ENCODE measurements at regions of chr11 and their contacts with region 1.

Region 1: GRCh38 chr11:64742889-64743590 is 902 bp downstream of the RASGRP2 start:
- DNase-seq: peak; percentile 69 to 82 (median 72)
- H3K4me3 ChIP-seq: peak overlapping the region; percentile 87
- H3K4me3 Mint-ChIP-seq: peak overlapping the region; percentile 90 to 99 (median 97)
- H3K27ac ChIP-seq: peak overlapping the region; percentile 77
- H3K27ac Mint-ChIP-seq: peak overlapping the region in 1 of 8 donors; percentile 96
- H3K4me1 ChIP-seq: peaks cover 31% of the 10 kb centered on the region
- H3K4me1 Mint-ChIP-seq: peaks cover 31 to 64% (median 35%) of the 10 kb centered on the region in 3 donors
- H3K27me3 ChIP-seq: no peaks in the 10 kb centered on the region
- H3K27me3 Mint-ChIP-seq: peaks cover 0 to 7% of the 10 kb centered on the region in 2 donors

Region 2: DNA sequence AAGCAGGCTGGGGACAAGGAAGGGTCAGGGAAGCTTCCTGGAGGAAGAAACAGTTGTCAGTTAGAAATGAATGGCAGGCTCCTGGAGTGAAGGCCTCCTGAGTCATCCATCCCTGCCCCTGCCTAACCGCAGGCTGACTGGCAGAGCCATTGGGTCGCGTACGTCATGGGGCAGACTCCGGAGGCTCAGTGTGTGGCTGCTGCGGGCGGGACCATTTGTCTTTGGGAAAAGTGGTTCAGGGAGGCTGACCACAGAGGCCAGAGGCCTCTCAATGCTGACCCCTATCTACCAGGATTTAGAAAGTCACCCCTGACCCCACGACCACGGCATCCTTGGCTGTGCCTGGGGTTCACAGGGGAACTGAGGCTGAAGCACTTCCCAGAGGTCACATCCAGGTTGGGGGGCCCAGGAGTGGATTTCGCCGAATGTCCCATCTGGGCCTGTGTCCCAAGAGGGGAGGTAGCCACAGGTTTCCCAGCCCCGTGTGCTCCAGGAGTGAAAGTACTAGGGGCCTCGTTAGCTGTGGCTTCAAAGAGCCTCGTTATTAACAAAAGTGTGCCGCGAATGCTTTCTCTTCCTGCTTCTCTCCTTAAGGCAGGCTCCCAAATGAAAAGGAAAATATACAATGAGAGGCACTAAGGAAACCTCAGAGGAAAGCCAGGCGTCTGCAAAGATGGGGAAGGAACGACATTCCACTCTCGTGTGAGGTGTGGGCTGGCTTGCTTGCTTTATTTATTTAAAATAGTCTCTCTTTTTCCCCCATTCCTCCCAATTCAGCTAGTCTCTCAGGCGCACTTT is 648.4 kb before region 1 on chr11:
- CTCF ChIA-PET with region 1: no interaction called
- POLR2A ChIA-PET with region 1: no interaction called
- DNase-seq: no peak
- H3K4me3 ChIP-seq: no peak overlapping the region
- H3K4me3 Mint-ChIP-seq: no peak overlapping the region
- H3K27ac ChIP-seq: no peak overlapping the region
- H3K27ac Mint-ChIP-seq: peak overlapping the region in 1 of 8 donors; percentile 14
- H3K4me1 ChIP-seq: no peaks in the 10 kb centered on the region
- H3K4me1 Mint-ChIP-seq: no peaks in the 10 kb centered on the region
- H3K27me3 ChIP-seq: no peaks in the 10 kb centered on the region
- H3K27me3 Mint-ChIP-seq: peaks cover 0 to 1% of the 10 kb centered on the region in 2 donors

Region 3: GRCh38 chr11:64688534-64688982 is 54.5 kb before region 1 on chr11:
- CTCF ChIA-PET with region 1: interaction called, 21 read pairs
- POLR2A ChIA-PET with region 1: interaction called, 3 read pairs
- DNase-seq: peak; percentile 83 to 92 (median 87)
- H3K4me3 ChIP-seq: peak overlapping the region; percentile 39
- H3K4me3 Mint-ChIP-seq: peak overlapping the region in 6 of 7 donors; percentile 55 to 82 (median 66)
- H3K27ac ChIP-seq: no peak overlapping the region
- H3K27ac Mint-ChIP-seq: peak overlapping the region in 6 of 8 donors; percentile 1 to 81 (median 27)
- H3K4me1 ChIP-seq: peaks cover 9% of the 10 kb centered on the region
- H3K4me1 Mint-ChIP-seq: peaks cover 9 to 27% (median 24%) of the 10 kb centered on the region in 3 donors
- H3K27me3 ChIP-seq: peaks cover 17% of the 10 kb centered on the region
- H3K27me3 Mint-ChIP-seq: peaks cover 23 to 29% of the 10 kb centered on the region in 2 donors

Region 4: DNA sequence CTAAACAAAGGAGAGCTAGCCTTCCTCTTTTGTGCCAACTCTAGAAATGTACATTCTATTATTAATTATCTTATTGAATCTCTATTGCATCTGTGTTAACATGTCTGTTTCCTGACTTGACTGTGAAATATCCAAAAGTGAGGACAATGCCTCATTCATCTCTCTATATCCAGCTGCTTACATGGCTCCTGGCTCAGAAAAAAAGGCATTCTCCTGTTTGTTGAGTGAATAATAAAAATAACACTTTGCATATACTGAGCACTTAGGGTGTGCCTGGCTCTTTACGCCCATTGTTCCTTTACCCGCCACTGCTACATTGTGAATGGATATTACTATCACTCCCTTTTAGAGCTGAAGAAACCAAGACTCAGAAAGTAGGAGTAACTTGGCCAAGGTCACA is 40.0 kb before region 1 on chr11:
- CTCF ChIA-PET with region 1: no interaction called
- POLR2A ChIA-PET with region 1: no interaction called
- DNase-seq: no peak
- H3K4me3 ChIP-seq: no peak overlapping the region
- H3K4me3 Mint-ChIP-seq: no peak overlapping the region
- H3K27ac ChIP-seq: no peak overlapping the region
- H3K27ac Mint-ChIP-seq: no peak overlapping the region
- H3K4me1 ChIP-seq: no peaks in the 10 kb centered on the region
- H3K4me1 Mint-ChIP-seq: no peaks in the 10 kb centered on the region
- H3K27me3 ChIP-seq: peaks cover 4% of the 10 kb centered on the region
- H3K27me3 Mint-ChIP-seq: peaks cover 21 to 40% of the 10 kb centered on the region in 2 donors

Region 5: GRCh38 chr11:64729851-64730382 is 13.1 kb before region 1 on chr11:
- CTCF ChIA-PET with region 1: interaction called, 10 read pairs
- POLR2A ChIA-PET with region 1: interaction called, 5 read pairs
- DNase-seq: no peak
- H3K4me3 ChIP-seq: no peak overlapping the region
- H3K4me3 Mint-ChIP-seq: no peak overlapping the region
- H3K27ac ChIP-seq: no peak overlapping the region
- H3K27ac Mint-ChIP-seq: peak overlapping the region in 3 of 8 donors; percentile 12 to 78 (median 70)
- H3K4me1 ChIP-seq: no peaks in the 10 kb centered on the region
- H3K4me1 Mint-ChIP-seq: peaks cover 14 to 23% (median 20%) of the 10 kb centered on the region in 3 donors
- H3K27me3 ChIP-seq: no peaks in the 10 kb centered on the region
- H3K27me3 Mint-ChIP-seq: no peaks in the 10 kb centered on the region

Region 6: DNA sequence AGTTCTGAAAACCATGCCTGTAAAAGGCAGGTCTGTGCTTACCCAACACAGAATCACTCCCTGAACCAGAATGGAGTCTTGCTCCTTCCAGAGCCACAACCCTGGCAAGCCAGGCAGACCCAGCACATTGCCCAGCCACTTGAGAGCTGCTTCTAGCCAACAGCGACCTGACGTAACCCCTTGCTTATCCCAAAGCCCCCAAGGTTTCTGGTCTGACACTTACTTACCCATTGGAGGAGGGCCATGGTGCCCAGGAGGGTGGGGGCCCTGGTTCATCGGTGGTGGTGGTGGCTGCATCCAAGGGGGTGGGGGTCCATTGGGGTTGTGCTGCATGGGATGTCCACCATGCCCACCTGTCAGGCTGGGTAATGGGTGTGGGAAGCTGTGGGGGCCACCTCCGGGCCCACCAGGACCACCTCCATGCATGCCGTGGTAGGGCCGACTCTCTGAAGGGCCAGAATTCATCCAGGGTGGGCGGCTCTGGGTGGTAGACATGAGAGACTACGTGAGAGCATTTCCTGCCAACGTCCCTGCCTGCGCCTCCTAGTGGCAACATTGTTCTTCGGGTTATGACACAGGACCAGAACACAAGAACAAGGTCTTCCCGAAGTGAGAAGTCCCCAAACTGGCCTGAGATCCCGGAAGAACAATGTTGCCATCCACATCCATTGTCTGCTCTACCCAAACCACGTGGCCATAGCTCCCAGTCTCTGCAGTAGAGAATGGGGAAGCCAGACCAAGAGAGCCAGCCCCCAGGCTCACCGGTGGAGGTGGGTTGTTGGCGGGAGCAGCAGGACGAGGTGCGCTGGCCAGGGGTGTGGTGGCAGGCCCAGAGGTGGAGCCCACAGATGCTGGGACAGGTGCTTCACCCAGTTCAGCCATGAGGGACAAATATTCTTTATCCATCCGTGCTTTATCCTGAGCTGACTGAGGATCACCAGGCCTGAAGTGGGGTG is 24.6 kb after region 1 on chr11:
- CTCF ChIA-PET with region 1: interaction called, 441 read pairs
- POLR2A ChIA-PET with region 1: interaction called, 220 read pairs
- DNase-seq: peak; percentile 72 to 88 (median 79)
- H3K4me3 ChIP-seq: no peak overlapping the region
- H3K4me3 Mint-ChIP-seq: peak overlapping the region; percentile 33 to 83 (median 64)
- H3K27ac ChIP-seq: peak overlapping the region; percentile 17
- H3K27ac Mint-ChIP-seq: peak overlapping the region; percentile 84 to 95 (median 89)
- H3K4me1 ChIP-seq: peaks cover 91% of the 10 kb centered on the region
- H3K4me1 Mint-ChIP-seq: peaks cover 80 to 94% (median 89%) of the 10 kb centered on the region in 3 donors
- H3K27me3 ChIP-seq: no peaks in the 10 kb centered on the region
- H3K27me3 Mint-ChIP-seq: peaks cover 0 to 6% of the 10 kb centered on the region in 2 donors

Region 7: GRCh38 chr11:64887757-64888405 is 144.8 kb after region 1 on chr11:
- CTCF ChIA-PET with region 1: no interaction called
- POLR2A ChIA-PET with region 1: no interaction called
- DNase-seq: peak; percentile 78 to 89 (median 84)
- H3K4me3 ChIP-seq: peak overlapping the region; percentile 60
- H3K4me3 Mint-ChIP-seq: peak overlapping the region; percentile 35 to 87 (median 78)
- H3K27ac ChIP-seq: peak overlapping the region; percentile 75
- H3K27ac Mint-ChIP-seq: peak overlapping the region in 7 of 8 donors; percentile 26 to 95 (median 85)
- H3K4me1 ChIP-seq: peaks cover 29% of the 10 kb centered on the region
- H3K4me1 Mint-ChIP-seq: peaks cover 24 to 41% (median 24%) of the 10 kb centered on the region in 3 donors
- H3K27me3 ChIP-seq: no peaks in the 10 kb centered on the region
- H3K27me3 Mint-ChIP-seq: no peaks in the 10 kb centered on the region

Region 8: DNA sequence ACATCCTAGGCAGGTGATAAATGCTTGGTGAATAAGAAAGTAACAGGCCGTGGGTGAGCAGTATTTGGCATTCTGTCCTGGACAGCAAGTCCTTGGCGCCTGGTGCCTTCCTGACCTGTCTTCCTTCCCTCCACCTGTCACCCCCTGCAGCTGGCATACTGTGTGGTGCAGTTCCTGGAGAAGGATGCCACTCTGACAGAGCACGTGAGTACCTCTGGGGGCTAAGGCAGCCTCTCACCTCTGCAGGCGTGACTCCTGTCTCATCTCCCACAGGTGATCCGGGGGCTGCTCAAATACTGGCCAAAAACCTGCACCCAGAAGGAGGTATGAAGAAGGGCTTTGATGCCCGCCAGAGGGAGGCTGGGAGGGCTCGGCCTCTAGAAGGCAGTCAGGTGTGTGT is 188.2 kb after region 1 on chr11:
- CTCF ChIA-PET with region 1: no interaction called
- POLR2A ChIA-PET with region 1: no interaction called
- DNase-seq: no peak
- H3K4me3 ChIP-seq: no peak overlapping the region
- H3K4me3 Mint-ChIP-seq: no peak overlapping the region
- H3K27ac ChIP-seq: no peak overlapping the region
- H3K27ac Mint-ChIP-seq: no peak overlapping the region
- H3K4me1 ChIP-seq: no peaks in the 10 kb centered on the region
- H3K4me1 Mint-ChIP-seq: no peaks in the 10 kb centered on the region
- H3K27me3 ChIP-seq: no peaks in the 10 kb centered on the region
- H3K27me3 Mint-ChIP-seq: no peaks in the 10 kb centered on the region